Dendritic cell treated with granulocyte-macrophage colony-stimulating factor and Interleukin-4, amounts not matched to agents 40 ng/mL and 50 ng/mL, for 4 days (primary cell): ENCODE measurements at regions of chr1 and their contacts with region 1.

Region 1: DNA sequence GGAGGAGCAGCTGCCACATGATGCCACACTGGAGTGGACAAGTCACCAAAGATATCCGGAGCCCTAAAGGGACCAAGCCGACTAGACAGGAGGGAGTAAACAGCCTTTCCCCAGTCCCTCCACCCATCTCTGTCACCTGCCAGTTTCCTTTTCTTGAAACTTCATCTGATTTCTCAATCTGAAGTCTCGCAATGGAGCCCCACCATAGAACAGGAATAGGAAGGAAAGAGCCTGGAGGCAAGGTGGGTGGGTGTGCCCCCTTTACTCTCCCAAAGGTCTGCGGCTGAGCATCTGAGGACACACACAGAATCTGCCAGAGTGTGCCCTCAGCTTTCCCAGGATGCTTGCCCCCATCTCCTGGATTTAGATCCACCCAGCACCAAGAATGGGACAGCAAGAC is at the start of gene FCGR3B:
- H3K4me3 Mint-ChIP-seq: no peak within 1 kb of the TSS
- H3K27ac Mint-ChIP-seq: no peak within 1 kb of the TSS
- H3K4me1 Mint-ChIP-seq: peaks cover 17% of the 10 kb centered on the region
- H3K27me3 Mint-ChIP-seq: peaks cover 5% of the 10 kb centered on the region

Region 2: GRCh38 chr1:161420763-161421455 is 210.2 kb before region 1 on chr1:
- intact Hi-C with region 1: no loop called
- H3K4me3 Mint-ChIP-seq: no peak overlapping the region
- H3K27ac Mint-ChIP-seq: no peak overlapping the region
- H3K4me1 Mint-ChIP-seq: no peaks in the 10 kb centered on the region
- H3K27me3 Mint-ChIP-seq: peaks cover 42% of the 10 kb centered on the region

Region 3: GRCh38 chr1:161549652-161550051 is 81.4 kb before region 1 on chr1 and contains the start of gene FCGR3A:
- intact Hi-C with region 1: loop called (anchors 10 kb)
- H3K4me3 Mint-ChIP-seq: peak within 1 kb of the TSS; percentile 57
- H3K27ac Mint-ChIP-seq: peak within 1 kb of the TSS; percentile 70
- H3K4me1 Mint-ChIP-seq: peaks cover 36% of the 10 kb centered on the region
- H3K27me3 Mint-ChIP-seq: no peaks in the 10 kb centered on the region